WTC11 (cell line): ENCODE measurements at regions of chr9 and their contacts with region 1.

Region 1: GRCh38 chr9:136671646-136672430 is 9.1 kb downstream of the EGFL7 start:
- DNase-seq: peak; percentile 80
- ATAC-seq: peak; percentile 61
- H3K4me3 Mint-ChIP-seq: no peak overlapping the region
- H3K27ac Mint-ChIP-seq: no peak overlapping the region
- H3K4me1 Mint-ChIP-seq: 0 out of 2 replicates have a peak, but pooled peaks cover 2% of the 10 kb centered on the region
- H3K27me3 Mint-ChIP-seq: no peaks in the 10 kb centered on the region
- CTCF ChIP-seq: peak; percentile 91

Region 2: GRCh38 chr9:136418182-136419091 is 253.4 kb before region 1 on chr9:
- CTCF ChIA-PET with region 1: no interaction called
- POLR2A ChIA-PET with region 1: no interaction called
- DNase-seq: no peak
- ATAC-seq: no peak
- H3K4me3 Mint-ChIP-seq: no peak overlapping the region
- H3K27ac Mint-ChIP-seq: no peak overlapping the region
- H3K4me1 Mint-ChIP-seq: no peaks in the 10 kb centered on the region
- H3K27me3 Mint-ChIP-seq: no peaks in the 10 kb centered on the region
- CTCF ChIP-seq: no peak

Region 3: DNA sequence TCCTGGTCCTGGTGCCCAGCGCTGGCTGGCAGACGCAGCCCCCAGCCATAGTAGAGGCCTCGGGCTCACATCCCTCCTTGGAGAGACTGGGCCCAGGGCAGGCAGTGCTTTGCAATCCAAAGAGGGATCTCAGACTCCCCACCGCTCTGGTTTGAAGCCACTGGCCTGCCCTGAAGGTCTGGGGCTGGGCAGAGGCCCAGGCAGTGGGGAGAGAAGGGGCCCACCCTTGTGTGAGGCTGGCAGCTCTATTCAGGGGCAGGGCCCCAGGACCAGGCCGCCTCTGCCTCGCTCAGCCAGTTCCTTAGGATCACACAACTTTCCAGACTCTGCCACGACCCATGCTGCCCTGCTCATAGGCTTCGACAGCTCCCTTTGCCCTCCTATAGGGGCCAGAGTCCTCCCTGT is 178.3 kb before region 1 on chr9:
- CTCF ChIA-PET with region 1: no interaction called
- POLR2A ChIA-PET with region 1: no interaction called
- DNase-seq: no peak
- ATAC-seq: no peak; the same call in 1 of the 2 replicates
- H3K4me3 Mint-ChIP-seq: no peak overlapping the region
- H3K27ac Mint-ChIP-seq: no peak overlapping the region
- H3K4me1 Mint-ChIP-seq: no peaks in the 10 kb centered on the region
- H3K27me3 Mint-ChIP-seq: no peaks in the 10 kb centered on the region
- CTCF ChIP-seq: no peak

Region 4: GRCh38 chr9:136656795-136657611 is 14.8 kb before region 1 on chr9:
- CTCF ChIA-PET with region 1: interaction called, 16 read pairs
- POLR2A ChIA-PET with region 1: no interaction called
- DNase-seq: no peak
- ATAC-seq: no peak
- H3K4me3 Mint-ChIP-seq: no peak overlapping the region
- H3K27ac Mint-ChIP-seq: no peak overlapping the region
- H3K4me1 Mint-ChIP-seq: 0 out of 2 replicates have a peak, but pooled peaks cover 3% of the 10 kb centered on the region
- H3K27me3 Mint-ChIP-seq: no peaks in the 10 kb centered on the region
- CTCF ChIP-seq: no peak

Region 5: DNA sequence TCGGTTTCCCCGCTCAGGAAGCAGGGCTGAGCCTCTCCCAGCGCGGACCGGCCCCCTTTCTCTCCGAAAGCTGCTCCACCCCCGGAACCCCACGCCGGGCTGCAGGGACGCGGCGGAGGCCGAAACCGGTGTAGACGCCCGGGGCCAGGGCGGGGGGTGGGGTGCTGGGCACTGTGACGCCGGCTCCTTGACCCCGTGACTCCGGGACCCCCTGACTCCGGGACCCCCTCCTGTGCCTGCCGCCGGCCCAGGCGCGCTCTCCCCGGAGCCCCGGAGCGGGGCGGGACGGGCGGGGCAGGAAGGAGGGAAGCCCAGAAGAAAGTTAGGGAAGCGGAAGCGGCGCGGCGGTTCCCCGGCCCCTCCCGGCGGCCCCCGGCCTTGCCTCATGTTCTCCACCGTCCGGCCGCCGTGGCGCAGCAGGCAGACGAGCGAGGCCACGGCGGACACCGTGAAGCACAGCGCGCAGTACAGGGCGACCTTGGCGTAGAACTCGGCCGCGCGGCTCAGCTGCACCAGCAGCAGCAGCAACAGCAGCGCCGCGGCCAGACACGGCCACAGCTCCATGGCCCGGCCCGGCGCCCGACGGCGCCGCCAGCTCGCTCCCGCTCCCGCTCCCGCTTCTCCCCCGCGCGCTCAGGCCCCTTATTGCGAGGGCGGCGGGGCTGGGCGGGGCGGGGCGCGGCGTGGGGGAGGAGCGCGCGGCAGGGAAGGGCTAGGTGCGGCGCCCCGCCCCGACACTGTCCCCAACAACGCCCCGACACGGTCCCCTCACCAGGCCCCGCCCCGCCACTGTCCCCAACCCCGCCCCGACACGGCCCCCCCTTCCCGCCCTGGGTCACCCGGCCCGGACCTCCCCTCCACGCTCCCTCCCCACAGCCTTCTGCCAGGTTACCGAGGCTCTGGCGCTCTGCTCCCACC is 15.2 kb after region 1 on chr9 and contains the start of gene AGPAT2:
- CTCF ChIA-PET with region 1: interaction called, 103 read pairs
- POLR2A ChIA-PET with region 1: interaction called, 3 read pairs
- DNase-seq: peak; percentile 61
- ATAC-seq: peak; percentile 59
- H3K4me3 Mint-ChIP-seq: peak within 1 kb of the TSS; percentile 68
- H3K27ac Mint-ChIP-seq: no peak within 1 kb of the TSS
- H3K4me1 Mint-ChIP-seq: peaks cover 11% of the 10 kb centered on the region
- H3K27me3 Mint-ChIP-seq: no peaks in the 10 kb centered on the region; the same call in 1 of the 2 replicates
- CTCF ChIP-seq: no peak
- total RNA-seq, gene AGPAT2: 40.2 to 42.2 TPM (median 41.2 TPM) in 3 replicates

Region 6: DNA sequence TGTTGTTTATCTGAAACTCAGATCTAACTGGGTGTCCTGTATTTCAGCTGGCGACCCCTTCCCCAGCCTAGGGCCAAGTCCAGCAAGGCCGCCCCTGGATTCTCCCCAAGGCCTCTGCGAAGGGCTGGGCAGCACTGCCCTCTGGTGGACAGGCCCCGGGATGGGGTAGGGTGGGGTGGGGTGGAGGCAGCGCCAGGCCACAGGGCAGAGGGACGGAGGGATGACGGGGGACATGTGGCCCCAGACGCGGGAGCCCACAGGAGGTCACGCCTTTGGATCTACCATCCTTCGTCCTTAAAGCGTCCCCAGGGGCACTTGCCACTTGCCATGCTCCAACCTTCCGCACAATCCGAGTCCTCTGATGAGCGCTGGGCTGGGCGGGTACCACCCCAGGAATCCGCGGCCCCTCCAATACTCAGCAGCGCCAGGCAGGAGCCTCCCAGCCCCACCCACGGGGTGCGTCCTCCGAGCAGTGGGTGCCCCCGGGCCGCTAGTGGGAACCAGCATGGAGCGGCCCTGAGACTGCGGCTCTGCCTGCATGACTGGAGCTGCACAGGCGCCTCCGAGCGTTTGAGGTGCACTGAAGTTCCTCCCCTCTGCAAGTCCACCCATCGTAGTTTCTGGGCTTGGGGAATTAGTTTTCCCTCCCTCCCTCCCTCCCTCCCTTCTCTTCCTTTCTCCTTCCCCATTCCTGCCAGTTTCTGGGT is 22.6 kb after region 1 on chr9:
- CTCF ChIA-PET with region 1: interaction called, 44 read pairs
- POLR2A ChIA-PET with region 1: no interaction called
- DNase-seq: peak; percentile 85
- ATAC-seq: peak; percentile 83
- H3K4me3 Mint-ChIP-seq: no peak overlapping the region
- H3K27ac Mint-ChIP-seq: no peak overlapping the region
- H3K4me1 Mint-ChIP-seq: peaks cover 10% of the 10 kb centered on the region
- H3K27me3 Mint-ChIP-seq: no peaks in the 10 kb centered on the region
- CTCF ChIP-seq: peak; percentile 41

Region 7: GRCh38 chr9:136700959-136701667 is 29.3 kb after region 1 on chr9:
- CTCF ChIA-PET with region 1: interaction called, 13 read pairs
- POLR2A ChIA-PET with region 1: interaction called, 6 read pairs
- DNase-seq: no peak
- ATAC-seq: peak; percentile 20
- H3K4me3 Mint-ChIP-seq: peak overlapping the region; percentile 60
- H3K27ac Mint-ChIP-seq: no peak overlapping the region
- H3K4me1 Mint-ChIP-seq: peaks cover 4% of the 10 kb centered on the region
- H3K27me3 Mint-ChIP-seq: peaks cover 23% of the 10 kb centered on the region
- CTCF ChIP-seq: no peak